ENCODE measurements at regions of chr9 and their contacts with region 1.

Region 1: GRCh38 chr9:124617471-124618141 is 110.4 kb upstream of the NR5A1 start:
- DNase-seq: peak; percentile 60 to 80
- H3K4me3 ChIP-seq: no peak overlapping the region
- H3K27ac ChIP-seq: peak overlapping the region; percentile 38
- H3K4me1 ChIP-seq: peaks cover 19% of the 10 kb centered on the region
- H3K27me3 ChIP-seq: no peaks in the 10 kb centered on the region
- CTCF ChIP-seq: peak; percentile 91

Region 2: DNA sequence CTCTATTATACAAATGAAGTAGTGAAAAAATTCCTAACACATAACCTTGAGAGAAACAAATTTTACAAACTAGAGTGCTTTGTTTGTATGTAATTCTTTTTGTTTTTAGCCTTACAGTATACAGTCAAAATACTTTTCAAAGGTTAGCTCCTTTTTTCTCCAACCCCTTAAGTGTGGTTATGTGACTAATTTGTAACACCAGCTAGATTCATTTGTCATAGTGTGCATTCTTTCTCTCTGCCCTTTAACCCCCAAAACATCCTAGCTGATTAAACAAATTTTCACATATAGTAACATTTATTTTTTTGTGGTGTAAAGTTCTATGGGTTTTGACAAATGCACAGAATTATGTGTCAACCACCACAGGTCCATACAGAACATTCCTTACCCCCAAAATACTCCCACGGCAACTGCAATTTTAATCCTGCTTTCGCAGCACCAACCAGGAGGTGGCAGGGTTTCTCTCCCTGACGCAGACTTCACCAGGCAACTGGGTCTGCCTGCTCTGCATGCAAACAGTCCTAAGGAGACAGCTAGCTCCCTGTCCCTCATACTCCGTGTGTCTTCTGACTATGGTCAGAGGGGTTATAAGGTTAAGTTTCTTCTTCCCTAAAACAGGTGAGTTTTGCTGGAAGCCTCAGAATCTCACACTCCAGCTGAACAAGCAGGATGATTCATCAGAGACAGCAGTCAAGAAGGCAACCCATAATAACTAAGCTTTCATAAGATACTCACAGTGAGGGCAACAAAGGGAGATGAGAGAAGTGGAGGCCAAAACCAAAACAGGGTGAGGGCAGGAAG is 65.9 kb before region 1 on chr9:
- CTCF ChIA-PET with region 1: interaction called, 34 read pairs
- POLR2A ChIA-PET with region 1: interaction called, 3 read pairs
- intact Hi-C with region 1: loop called (anchors 1 kb)
- DNase-seq: peak; percentile 71 to 78
- H3K4me3 ChIP-seq: no peak overlapping the region
- H3K27ac ChIP-seq: peak overlapping the region; percentile 45
- H3K4me1 ChIP-seq: peaks cover 23% of the 10 kb centered on the region
- H3K27me3 ChIP-seq: no peaks in the 10 kb centered on the region
- CTCF ChIP-seq: peak; percentile 78

Region 3: DNA sequence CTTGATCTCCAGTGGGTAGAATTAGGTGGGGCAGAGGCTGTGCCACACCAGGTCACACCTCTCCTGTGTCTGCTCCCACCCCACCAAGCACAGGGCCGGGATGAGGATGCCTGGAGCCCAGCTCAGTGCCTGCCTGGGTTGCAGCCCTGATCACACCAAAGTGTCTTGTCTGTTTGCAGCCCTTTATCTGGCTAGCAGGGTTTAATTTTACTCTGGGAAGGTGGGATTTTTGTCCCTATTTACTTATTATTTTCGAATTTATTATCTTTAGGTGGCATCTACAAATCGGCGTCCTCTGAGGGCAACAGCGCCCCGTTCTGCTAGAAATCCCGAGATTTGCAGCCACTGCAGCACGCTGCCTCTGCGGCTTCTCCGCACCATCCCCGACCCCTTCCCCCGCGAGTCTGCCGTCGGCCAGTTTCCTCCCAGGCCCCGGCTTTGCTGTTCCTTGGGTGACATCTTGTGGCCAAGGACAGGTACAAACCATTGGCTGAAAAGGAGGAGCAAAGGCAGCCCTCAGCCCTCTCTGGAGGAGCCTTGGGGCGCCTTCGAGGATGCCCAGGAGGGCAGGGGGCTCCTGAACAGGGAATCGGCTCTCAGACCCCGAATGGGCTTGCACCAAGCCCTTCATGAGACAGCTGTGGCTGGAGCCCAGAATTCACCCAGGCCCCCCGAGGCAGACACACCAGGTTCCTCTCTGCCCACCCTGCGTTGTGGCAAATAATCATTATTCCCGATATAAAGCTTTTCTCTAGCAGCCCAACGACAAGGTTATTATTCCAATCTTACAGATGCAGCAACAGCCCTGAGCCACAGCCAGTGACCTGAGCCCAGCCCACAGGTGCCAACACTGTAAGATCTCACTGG is 757.1 kb after region 1 on chr9:
- CTCF ChIA-PET with region 1: no interaction called
- POLR2A ChIA-PET with region 1: no interaction called
- intact Hi-C with region 1: loop called (anchors 5 kb)
- DNase-seq: peak; percentile 57 to 70
- H3K4me3 ChIP-seq: peak overlapping the region; percentile 49; the same call in 1 of the 2 replicates
- H3K27ac ChIP-seq: no peak overlapping the region
- H3K4me1 ChIP-seq: no peaks in the 10 kb centered on the region
- H3K27me3 ChIP-seq: no peaks in the 10 kb centered on the region
- CTCF ChIP-seq: peak; percentile 91